Right cardiac atrium (tissue), 5 donors: ENCODE measurements at regions of chr4 and their contacts with region 1.

Region 1: GRCh38 chr4:9999956-10000551 is 21.2 kb downstream of the SLC2A9 start:
- DNase-seq: no peak
- ATAC-seq: no peak
- H3K4me3 ChIP-seq: no peak overlapping the region
- H3K27ac ChIP-seq: no peak overlapping the region
- H3K4me1 ChIP-seq: no peaks in the 10 kb centered on the region
- H3K27me3 ChIP-seq: no peaks in the 10 kb centered on the region

Region 2: GRCh38 chr4:9904976-9905587 is 95.0 kb before region 1 on chr4:
- intact Hi-C with region 1: loop called in 1 of 4 experiments (anchors 10 kb)
- DNase-seq: peak in 2 of 3 donors; percentile 64 to 66
- ATAC-seq: peak in 1 of 2 donors; percentile 30
- H3K4me3 ChIP-seq: no peak overlapping the region
- H3K27ac ChIP-seq: no peak overlapping the region
- H3K4me1 ChIP-seq: peaks cover 4% of the 10 kb centered on the region
- H3K27me3 ChIP-seq: no peaks in the 10 kb centered on the region

Region 3: DNA sequence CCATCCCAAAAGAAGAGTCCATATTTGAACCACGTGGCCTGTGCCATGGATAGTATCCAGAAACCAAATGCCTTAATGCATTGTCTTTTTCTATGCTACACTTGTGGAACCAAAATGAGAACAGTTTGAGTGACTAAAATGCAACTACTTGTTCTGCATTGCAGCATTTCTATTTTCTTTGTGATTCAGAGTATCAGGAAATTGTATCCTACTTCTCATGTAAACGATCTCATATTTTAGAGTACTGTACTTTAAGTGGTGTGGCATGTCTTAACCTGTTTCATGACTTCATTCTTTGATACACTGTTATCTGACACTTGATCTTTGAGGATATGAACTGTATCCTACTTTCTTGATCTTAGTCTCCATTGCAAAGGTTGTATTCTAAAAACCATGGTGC is 283.7 kb after region 1 on chr4:
- intact Hi-C with region 1: no loop called
- DNase-seq: no peak
- ATAC-seq: no peak
- H3K4me3 ChIP-seq: no peak overlapping the region
- H3K27ac ChIP-seq: no peak overlapping the region
- H3K4me1 ChIP-seq: no peaks in the 10 kb centered on the region
- H3K27me3 ChIP-seq: no peaks in the 10 kb centered on the region